Activated CD4-positive, alpha-beta T cell treated with anti-CD3 and anti-CD28 coated beads, Interleukin-2, amount 10 ng/mL, durations not matched to agents 24 days and 14 days (primary cell): ENCODE measurements at regions of chr7 and their contacts with region 1.

Region 1: DNA sequence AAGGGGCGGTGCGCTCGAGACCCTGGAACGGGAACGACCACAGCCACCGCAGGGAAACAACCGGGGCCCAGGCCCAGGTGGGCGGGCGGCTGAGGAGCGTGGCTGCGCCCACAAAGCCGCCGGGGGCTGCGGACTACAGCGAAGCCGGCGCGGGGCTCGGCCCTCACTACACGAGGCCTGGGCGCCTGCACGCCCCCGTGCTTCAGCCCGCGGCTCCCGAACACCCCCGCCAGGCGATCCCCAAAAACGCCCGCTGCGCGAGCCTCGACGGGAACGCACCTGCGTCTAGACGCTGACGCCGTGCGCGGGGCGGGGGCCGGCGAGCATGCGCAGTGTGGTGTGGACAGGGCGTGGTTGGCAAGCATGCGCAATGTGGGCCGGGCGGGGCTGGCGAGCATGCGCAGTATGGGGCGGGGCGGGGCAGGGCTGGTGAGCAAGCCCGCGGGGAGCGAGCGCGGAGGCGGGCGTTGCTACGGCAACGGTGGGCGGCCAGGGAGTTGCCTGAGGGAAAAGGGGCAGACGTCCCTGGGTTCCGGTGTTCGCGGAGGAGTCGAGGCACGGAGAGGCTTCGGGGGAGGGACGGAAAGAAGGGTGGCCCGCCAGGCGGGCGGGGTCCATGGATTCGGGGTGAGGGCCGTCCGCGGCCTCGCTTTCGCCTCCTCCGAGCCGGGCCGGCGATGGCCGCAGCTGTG is at the start of gene RNF32:
- DNase-seq: peak; percentile 99
- H3K4me3 Mint-ChIP-seq: peak within 1 kb of the TSS; percentile 97
- H3K27ac Mint-ChIP-seq: peak within 1 kb of the TSS; percentile 99
- H3K4me1 Mint-ChIP-seq: peaks cover 41% of the 10 kb centered on the region
- H3K27me3 Mint-ChIP-seq: peaks cover 11% of the 10 kb centered on the region
- total RNA-seq, gene RNF32: 2.3 and 2.4 TPM in 2 replicates

Region 2: DNA sequence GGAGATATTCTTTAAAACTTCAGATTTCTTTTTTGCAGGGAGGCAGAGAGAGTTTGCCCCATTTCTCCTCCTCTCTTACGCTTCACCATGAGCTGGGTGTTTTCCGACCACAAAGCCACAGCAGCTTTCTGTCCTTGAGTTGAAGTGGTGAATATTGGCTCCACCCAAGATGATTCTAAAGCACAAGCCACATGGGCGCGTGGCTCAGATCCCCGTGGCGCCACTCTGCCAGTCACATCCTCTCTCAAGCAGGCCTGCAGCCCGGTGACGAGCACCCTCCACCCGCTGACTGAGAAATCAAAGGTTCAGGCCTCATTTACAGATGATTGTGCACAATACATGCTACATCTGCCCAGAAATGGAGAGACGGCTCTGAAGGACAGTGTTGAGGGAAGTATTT is 27.5 kb before region 1 on chr7:
- intact Hi-C with region 1: loop called (anchors 1 kb)
- DNase-seq: peak; percentile 95
- H3K4me3 Mint-ChIP-seq: peak overlapping the region; percentile 70
- H3K27ac Mint-ChIP-seq: peak overlapping the region; percentile 68
- H3K4me1 Mint-ChIP-seq: peaks cover 43% of the 10 kb centered on the region
- H3K27me3 Mint-ChIP-seq: peaks cover 67% of the 10 kb centered on the region

Region 3: GRCh38 chr7:156751319-156751718 is 110.9 kb after region 1 on chr7:
- intact Hi-C with region 1: loop called (anchors 5 kb)
- DNase-seq: peak; percentile 82
- H3K4me3 Mint-ChIP-seq: peak overlapping the region; percentile 53
- H3K27ac Mint-ChIP-seq: no peak overlapping the region
- H3K4me1 Mint-ChIP-seq: peaks cover 21% of the 10 kb centered on the region
- H3K27me3 Mint-ChIP-seq: no peaks in the 10 kb centered on the region

Region 4: GRCh38 chr7:156773966-156774365 is 133.6 kb after region 1 on chr7:
- intact Hi-C with region 1: loop called (anchors 1 kb)
- DNase-seq: no peak
- H3K4me3 Mint-ChIP-seq: no peak overlapping the region
- H3K27ac Mint-ChIP-seq: peak overlapping the region; percentile 20
- H3K4me1 Mint-ChIP-seq: peaks cover 36% of the 10 kb centered on the region
- H3K27me3 Mint-ChIP-seq: no peaks in the 10 kb centered on the region

Region 5: DNA sequence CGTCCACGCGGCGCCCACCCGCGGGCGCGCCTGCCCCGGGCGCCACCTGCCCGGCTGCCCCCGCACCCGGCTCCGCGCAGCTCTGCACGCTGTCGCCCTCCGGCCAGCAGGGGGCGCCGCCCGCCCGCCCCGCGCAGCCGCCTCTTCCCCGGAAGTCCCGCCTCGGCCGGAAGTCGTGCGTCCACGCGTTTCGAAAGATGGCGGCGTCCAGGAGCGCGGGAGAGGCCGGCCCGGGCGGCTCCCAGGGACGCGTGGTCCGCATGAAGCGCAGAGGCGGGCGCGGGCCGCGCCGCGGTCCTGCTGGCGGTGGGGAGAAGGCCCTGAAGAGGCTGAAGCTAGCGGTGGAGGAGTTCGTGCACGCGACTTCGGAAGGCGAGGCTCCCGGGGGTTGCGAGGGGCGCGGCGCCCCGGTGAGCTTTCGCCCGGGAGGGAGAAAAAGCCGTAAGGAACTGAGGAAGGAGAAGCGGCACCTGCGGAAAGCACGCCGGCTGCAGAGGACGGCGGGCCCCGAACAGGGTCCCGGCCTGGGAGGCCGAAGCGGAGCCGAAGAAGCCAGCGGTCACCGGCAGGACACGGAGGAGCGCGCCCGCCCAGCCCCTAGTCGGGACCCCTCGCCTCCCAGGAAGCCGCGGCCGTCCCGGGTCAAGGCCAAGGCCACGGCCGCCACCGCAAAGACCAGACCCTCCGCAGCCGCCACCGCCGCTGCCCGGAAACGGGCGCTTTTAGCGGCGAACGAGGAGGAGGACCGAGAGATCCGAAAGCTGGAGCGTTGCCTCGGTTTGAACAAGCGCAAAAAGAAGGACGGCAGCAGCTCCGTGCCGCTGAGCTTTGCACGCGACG is 309.4 kb after region 1 on chr7 and contains the start of gene NOM1:
- intact Hi-C with region 1: loop called (anchors 1 kb)
- DNase-seq: peak; percentile 98
- H3K4me3 Mint-ChIP-seq: peak within 1 kb of the TSS; percentile 100
- H3K27ac Mint-ChIP-seq: peak within 1 kb of the TSS; percentile 96
- H3K4me1 Mint-ChIP-seq: peaks cover 28% of the 10 kb centered on the region
- H3K27me3 Mint-ChIP-seq: peaks cover 16% of the 10 kb centered on the region
- total RNA-seq, gene NOM1: 50.5 and 54.5 TPM in 2 replicates